Common myeloid progenitor, CD34-positive (primary cell): ENCODE measurements at regions of chr1 and their contacts with region 1.

Region 1: DNA sequence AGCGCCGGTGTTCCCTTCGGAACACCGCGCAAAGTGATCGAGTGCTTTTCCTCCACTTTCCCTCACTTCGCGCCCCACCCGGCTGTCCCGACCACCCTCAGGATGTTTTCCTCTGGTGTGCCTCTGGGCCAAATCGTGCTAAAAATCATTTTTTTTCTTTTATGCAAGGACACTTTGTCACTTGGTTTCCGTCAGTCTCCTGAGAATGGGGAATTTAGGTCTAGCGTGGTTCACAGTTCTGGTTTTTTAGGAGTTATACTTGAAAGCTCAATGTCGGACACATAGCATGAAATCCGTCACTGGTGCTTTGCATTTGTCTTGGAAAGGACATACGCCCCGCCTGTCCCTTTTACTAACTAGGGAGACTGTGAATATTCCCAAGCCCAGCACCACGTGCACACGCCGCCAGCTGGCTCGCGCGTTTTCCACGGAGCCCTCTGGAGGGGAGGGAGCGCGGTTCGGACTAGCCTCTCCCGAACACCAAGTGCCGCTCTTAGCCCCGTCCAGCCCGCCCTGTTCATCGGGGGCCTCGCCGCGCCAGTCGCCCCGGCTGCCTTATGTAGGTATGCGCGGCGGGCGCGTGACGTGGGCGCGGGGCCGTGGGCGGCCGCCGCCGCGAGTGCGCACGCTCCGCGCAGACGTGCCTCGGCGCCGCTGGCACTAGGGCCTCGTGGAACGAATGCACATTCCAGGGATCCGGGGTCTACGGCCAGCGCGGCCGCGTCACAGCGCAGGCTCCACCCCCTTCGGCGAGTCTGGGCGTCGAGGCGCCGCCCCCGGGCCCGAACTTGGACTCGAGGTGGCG is 572 bp upstream of the IRF2BP2 start:
- DNase-seq: peak; percentile 89 to 94 (median 93)
- H3K4me3 ChIP-seq: peak overlapping the region; percentile 36 to 97 (median 74)
- H3K27ac ChIP-seq: peak overlapping the region; percentile 91 to 94
- H3K4me1 ChIP-seq: peaks cover 33 to 66% (median 56%) of the 10 kb centered on the region in 4 experiments
- H3K27me3 ChIP-seq: no peaks in the 10 kb centered on the region

Region 2: GRCh38 chr1:234281826-234282489 is 328.6 kb before region 1 on chr1:
- CTCF ChIA-PET with region 1: no interaction called
- POLR2A ChIA-PET with region 1: no interaction called
- DNase-seq: no peak
- H3K4me3 ChIP-seq: no peak overlapping the region
- H3K27ac ChIP-seq: no peak overlapping the region
- H3K4me1 ChIP-seq: no peaks in the 10 kb centered on the region
- H3K27me3 ChIP-seq: peaks cover 0 to 5% (median 0%) of the 10 kb centered on the region in 5 experiments

Region 3: DNA sequence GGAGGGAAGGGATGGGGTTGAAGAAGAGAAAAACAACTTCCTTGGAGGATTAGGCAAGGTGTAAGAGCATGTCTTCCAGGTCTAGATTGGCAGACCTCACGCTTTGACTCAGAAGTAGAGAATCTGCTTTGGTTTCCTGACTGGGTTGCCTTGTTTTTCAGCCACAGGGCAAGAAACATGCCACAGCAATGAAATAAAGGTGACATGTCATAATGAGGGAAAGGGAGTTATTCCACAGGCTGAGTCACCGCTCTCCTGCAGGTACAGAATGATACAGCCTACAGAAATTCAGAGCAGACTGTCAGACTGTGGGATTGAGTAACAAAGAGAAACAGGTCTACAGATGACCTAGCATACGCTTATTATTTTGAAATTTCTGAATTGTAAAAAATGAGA is 45.9 kb before region 1 on chr1:
- CTCF ChIA-PET with region 1: no interaction called
- POLR2A ChIA-PET with region 1: no interaction called
- DNase-seq: peak in 1 of 3 donors; percentile 26
- H3K4me3 ChIP-seq: no peak overlapping the region
- H3K27ac ChIP-seq: no peak overlapping the region
- H3K4me1 ChIP-seq: peaks cover 0 to 6% (median 1%) of the 10 kb centered on the region in 4 experiments
- H3K27me3 ChIP-seq: no peaks in the 10 kb centered on the region

Region 4: DNA sequence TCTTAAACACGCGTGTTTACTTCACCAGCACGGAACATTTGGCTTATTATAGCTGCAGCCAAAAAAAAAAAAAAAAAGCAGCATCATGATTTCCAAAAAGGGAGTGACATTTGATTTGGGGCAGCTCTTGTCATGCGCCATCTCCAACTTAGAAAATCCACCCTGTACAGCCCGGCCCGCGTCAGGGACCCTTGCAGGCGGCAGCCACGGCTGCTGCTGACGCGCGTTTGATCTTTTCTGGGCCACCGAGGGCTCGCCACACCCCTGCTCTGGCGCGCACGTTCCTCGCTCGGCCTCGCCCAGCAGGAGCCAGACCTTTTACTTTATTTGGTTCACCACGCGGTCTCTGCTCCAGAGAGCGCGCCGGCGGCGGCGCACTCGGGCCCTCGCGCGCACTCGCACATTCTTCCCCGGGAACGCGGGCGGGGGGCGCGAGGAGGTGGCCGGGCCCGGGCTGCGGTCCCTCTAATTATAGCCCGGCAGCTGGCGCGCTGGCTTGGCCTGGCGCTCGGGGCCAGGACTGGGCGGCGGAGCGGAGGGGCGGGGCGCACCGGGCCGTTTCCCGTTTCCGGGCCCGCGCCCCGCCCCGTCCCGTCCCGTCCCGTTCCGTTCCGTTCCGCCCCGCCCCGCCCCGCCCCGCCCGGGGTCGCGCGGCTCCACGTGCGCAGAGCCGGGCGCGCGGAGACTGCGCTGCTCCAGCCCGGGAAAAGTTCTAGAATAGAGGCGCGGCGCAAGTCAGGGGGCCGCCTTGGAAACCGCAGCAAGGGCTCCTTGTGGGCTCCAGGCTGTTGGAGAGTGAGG is 10.7 kb before region 1 on chr1:
- CTCF ChIA-PET with region 1: interaction called, 15 read pairs
- POLR2A ChIA-PET with region 1: interaction called, 23 read pairs
- DNase-seq: peak; percentile 86 to 94 (median 91)
- H3K4me3 ChIP-seq: peak overlapping the region in 6 of 7 experiments; percentile 35 to 72 (median 60)
- H3K27ac ChIP-seq: peak overlapping the region; percentile 20 to 79
- H3K4me1 ChIP-seq: peaks cover 49 to 64% (median 56%) of the 10 kb centered on the region in 4 experiments
- H3K27me3 ChIP-seq: no peaks in the 10 kb centered on the region

Region 5: GRCh38 chr1:234722904-234723720 is 112.6 kb after region 1 on chr1:
- CTCF ChIA-PET with region 1: interaction called, 30 read pairs
- POLR2A ChIA-PET with region 1: interaction called, 117 read pairs
- DNase-seq: peak; percentile 87 to 97 (median 95)
- H3K4me3 ChIP-seq: peak overlapping the region in 3 of 7 experiments; percentile 13 to 45 (median 33)
- H3K27ac ChIP-seq: peak overlapping the region; percentile 100
- H3K4me1 ChIP-seq: peaks cover 27 to 98% (median 91%) of the 10 kb centered on the region in 4 experiments
- H3K27me3 ChIP-seq: no peaks in the 10 kb centered on the region

Region 6: GRCh38 chr1:234866007-234866866 is 255.7 kb after region 1 on chr1:
- CTCF ChIA-PET with region 1: no interaction called
- POLR2A ChIA-PET with region 1: interaction called, 13 read pairs
- DNase-seq: peak in 2 of 3 donors; percentile 39 to 60
- H3K4me3 ChIP-seq: no peak overlapping the region
- H3K27ac ChIP-seq: peak overlapping the region in 1 of 2 experiments; percentile 75
- H3K4me1 ChIP-seq: peaks cover 1 to 33% (median 27%) of the 10 kb centered on the region in 4 experiments
- H3K27me3 ChIP-seq: no peaks in the 10 kb centered on the region

Region 7: DNA sequence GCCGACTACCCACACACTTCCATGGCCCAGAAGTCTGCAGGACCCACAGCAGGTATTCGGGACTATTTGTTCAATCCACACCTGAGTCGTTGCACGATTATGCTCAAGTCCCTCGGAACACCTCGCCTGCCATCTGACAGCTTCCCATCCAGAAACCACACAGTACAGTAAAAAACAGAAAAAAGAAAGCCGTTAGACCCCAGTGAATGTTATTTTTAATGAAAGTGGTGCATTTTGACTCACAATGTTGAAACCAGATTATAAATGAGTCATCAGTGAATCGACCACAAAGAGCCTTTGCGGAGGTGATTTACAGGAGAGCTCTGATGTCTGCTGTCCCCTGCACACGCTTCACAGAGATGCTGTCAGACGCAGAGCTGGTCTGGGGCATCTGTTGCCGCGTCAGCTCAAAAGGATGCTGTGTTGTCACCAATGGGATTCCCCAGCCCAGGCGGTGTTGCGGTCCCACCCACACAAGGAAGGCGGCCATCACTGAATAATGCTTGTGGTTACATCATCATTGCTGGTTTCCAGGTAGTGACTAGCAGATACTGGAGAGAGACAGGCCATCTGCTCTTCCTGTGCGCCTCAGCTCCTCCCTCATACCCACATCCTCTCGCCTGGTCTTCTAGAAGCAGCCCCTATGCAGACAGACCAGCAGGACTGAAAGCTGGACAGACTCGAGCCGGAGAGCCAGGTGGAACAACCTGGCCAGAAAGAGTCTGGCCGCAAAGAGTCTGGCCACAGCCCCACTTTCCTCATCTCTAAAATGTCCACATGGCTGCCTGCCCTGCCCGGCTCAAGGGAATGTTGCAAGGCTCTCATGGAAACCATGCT is 401.3 kb after region 1 on chr1:
- CTCF ChIA-PET with region 1: interaction called, 4 read pairs
- POLR2A ChIA-PET with region 1: interaction called, 16 read pairs
- DNase-seq: peak; percentile 99 to 100 (median 100)
- H3K4me3 ChIP-seq: peak overlapping the region in 4 of 7 experiments; percentile 15 to 44 (median 30)
- H3K27ac ChIP-seq: peak overlapping the region; percentile 91 to 94
- H3K4me1 ChIP-seq: peaks cover 3 to 52% (median 40%) of the 10 kb centered on the region in 4 experiments
- H3K27me3 ChIP-seq: no peaks in the 10 kb centered on the region